ENCODE measurements at regions of chr3 and their contacts with region 1.

Region 1: DNA sequence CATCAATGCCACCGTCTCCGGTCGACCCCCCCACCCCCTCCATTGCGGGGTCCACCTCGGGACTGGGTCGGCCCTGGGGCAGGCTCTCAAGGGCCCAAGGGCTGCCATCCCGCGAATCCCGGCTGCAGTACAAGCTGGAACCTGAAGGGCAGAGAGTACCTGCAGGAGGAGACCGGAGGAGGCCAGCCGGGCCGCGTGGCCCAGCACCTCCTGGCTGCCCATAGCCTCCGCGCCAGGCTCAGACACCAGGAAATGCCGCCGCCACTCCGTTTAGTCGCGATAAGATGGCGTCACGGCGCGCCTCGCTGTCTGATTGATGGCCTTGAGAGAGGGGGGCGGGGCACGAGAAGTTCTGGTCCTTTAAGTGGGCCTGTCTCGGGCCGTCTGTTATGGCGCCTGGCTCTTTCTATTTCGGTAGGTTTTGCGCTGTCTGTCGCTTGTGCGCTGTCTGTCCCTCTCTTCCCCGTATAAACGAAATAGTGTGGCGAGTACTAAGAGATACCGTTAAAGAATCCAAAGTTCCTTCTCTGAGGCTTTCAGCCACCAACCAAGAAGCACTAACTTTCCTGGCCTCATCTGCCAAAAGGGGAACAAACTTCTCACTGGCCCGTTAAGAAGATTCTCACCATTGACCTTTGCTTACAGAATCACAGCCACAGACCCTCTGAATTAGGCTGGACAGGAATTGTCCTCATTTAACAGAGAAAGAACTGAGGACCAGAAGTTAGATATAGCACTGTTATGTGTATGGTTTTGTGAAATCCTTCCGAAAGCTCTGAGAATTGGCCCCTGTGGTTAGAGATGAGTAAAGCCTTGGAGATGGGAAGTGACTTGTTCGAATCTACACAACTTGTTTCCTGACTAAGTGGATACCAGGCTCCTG is at the start of gene RFT1:
- DNase-seq: peak; percentile 95 to 97 (median 96)
- H3K4me3 ChIP-seq: peak within 1 kb of the TSS; percentile 82 to 96 (median 95)
- H3K4me3 Mint-ChIP-seq: peak within 1 kb of the TSS; percentile 78 to 94
- H3K27ac ChIP-seq: peak within 1 kb of the TSS; percentile 95 to 100
- H3K27ac Mint-ChIP-seq: peak within 1 kb of the TSS; percentile 98 to 100 (median 99)
- H3K4me1 ChIP-seq: peaks cover 35 to 49% of the 10 kb centered on the region in 2 donors
- H3K4me1 Mint-ChIP-seq: peaks cover 38% of the 10 kb centered on the region
- H3K27me3 ChIP-seq: no peaks in the 10 kb centered on the region
- H3K27me3 Mint-ChIP-seq: peaks cover 0 to 2% (median 0%) of the 10 kb centered on the region in 3 donors
- CTCF ChIP-seq: no peak
- polyA plus RNA-seq, gene RFT1: 8.2 to 34.9 (median 25.6) TPM

Region 2: DNA sequence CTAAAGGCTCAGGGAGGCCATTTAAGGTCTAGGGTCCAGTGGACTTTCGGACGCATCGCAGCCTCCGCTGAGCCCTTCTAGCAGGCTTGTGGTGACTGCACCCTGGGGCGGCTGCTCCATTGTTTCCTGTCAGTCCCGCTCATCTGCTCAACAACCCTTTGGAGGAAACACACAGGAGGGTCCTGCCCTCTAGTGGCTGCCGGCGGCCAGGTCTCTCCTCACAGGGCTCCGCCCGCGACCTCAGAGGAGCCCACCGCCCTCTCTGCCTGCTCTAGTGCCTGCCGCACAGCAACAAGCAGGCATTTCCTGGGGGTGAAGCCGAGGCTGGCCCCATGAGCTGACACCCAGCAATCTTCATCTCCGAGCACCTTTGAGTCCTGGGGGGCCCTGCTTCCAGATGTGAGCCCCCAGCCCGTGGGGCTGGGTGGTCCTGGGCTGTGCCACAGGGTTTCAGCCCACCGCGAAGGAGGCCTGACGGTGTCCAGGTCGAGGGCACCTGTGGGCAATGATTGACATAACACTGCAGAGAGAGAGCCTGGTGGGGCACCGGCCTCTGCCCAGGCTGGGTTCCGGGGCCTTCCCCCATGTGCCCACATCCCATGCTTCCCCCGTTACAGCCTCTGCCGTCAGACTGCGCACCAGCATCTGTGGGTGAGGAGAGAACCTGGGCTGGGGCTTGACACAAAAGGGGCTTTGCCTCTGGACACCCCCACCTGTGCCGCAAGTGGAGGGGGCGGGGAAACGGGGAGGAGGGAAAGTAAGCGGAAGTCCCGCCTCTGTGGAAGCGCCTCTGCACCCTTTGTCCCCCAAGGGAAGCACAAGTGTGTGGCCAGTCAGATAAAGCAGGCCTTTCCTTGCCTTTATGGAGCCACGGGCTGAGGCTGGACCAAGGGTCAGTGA is 57.5 kb before region 1 on chr3:
- intact Hi-C with region 1: no loop called
- DNase-seq: peak; percentile 69 to 74 (median 73)
- H3K4me3 ChIP-seq: peak overlapping the region; percentile 64 to 99 (median 92)
- H3K4me3 Mint-ChIP-seq: peak overlapping the region; percentile 90 to 95
- H3K27ac ChIP-seq: peak overlapping the region; percentile 24 to 72
- H3K27ac Mint-ChIP-seq: peak overlapping the region; percentile 68 to 90 (median 79)
- H3K4me1 ChIP-seq: peaks cover 19 to 26% of the 10 kb centered on the region in 2 donors
- H3K4me1 Mint-ChIP-seq: peaks cover 23% of the 10 kb centered on the region
- H3K27me3 ChIP-seq: no peaks in the 10 kb centered on the region
- H3K27me3 Mint-ChIP-seq: peaks cover 3 to 6% (median 6%) of the 10 kb centered on the region in 3 donors
- CTCF ChIP-seq: peak; percentile 98

Region 3: GRCh38 chr3:53166781-53167291 is 36.4 kb after region 1 on chr3:
- intact Hi-C with region 1: loop called (anchors 5 kb)
- DNase-seq: peak; percentile 79 to 89 (median 89)
- H3K4me3 ChIP-seq: peak overlapping the region; percentile 8 to 93 (median 63)
- H3K4me3 Mint-ChIP-seq: peak overlapping the region; percentile 94 to 96
- H3K27ac ChIP-seq: peak overlapping the region; percentile 78 to 93
- H3K27ac Mint-ChIP-seq: peak overlapping the region; percentile 91 to 99 (median 96)
- H3K4me1 ChIP-seq: peaks cover 91 to 92% of the 10 kb centered on the region in 2 donors
- H3K4me1 Mint-ChIP-seq: peaks cover 94% of the 10 kb centered on the region
- H3K27me3 ChIP-seq: no peaks in the 10 kb centered on the region
- H3K27me3 Mint-ChIP-seq: peaks cover 0 to 3% (median 0%) of the 10 kb centered on the region in 3 donors
- CTCF ChIP-seq: no peak

Region 4: GRCh38 chr3:53180305-53181023 is 50.0 kb after region 1 on chr3:
- intact Hi-C with region 1: loop called in 1 of 2 experiments (anchors 5 kb)
- DNase-seq: peak; percentile 72 to 87 (median 75)
- H3K4me3 ChIP-seq: peak overlapping the region in 1 of 3 experiments; percentile 57
- H3K4me3 Mint-ChIP-seq: peak overlapping the region in 1 of 2 donors; percentile 65
- H3K27ac ChIP-seq: peak overlapping the region; percentile 54 to 65
- H3K27ac Mint-ChIP-seq: peak overlapping the region; percentile 70 to 89 (median 75)
- H3K4me1 ChIP-seq: peaks cover 52 to 59% of the 10 kb centered on the region in 2 donors
- H3K4me1 Mint-ChIP-seq: peaks cover 50% of the 10 kb centered on the region
- H3K27me3 ChIP-seq: no peaks in the 10 kb centered on the region
- H3K27me3 Mint-ChIP-seq: no peaks in the 10 kb centered on the region
- CTCF ChIP-seq: no peak

Region 5: DNA sequence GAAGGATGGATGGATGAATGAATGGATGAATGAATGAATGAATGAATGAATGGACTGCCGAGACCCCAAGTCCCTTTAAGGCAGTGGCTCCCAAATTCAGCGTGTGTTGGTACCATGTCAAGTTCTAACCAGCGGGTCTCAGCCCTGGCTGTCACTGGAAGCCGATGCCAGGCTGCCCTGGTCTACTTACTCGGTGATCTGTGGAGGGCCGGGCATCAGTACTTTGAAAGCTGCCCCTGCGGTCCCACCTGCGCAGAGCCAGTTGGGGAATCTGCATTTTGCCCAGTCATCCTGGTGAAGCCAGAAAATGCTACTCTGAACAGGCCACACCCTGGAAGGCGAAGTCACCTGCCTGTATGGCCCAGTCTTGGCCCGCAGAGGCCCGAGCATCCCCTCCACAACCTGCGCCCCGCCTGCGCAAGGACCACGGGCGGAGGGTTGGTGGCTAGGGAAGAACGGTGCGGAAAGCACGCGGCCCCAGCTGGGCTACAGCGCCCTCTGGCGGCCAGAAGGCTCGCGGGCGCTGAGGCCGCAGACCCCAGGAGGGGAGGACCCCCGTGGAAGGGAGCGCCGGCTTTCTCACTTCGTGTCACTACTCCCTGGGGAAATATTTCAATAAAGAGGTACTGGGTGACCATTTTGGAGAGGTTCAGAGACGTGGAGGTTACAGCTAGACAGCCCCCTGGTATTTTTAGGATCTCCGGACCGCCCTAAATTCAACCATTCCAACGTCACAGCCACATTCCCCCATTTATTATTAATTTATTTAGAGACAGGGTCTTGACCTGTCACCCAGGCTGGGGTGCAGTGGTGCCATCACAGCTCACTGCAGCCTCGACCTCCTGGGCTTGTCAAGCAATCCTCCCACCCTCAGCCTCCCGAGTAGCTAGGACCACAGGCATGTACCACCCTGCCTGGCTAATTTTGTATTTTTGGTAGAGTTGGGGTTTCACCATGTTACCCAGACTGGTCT is 65.5 kb after region 1 on chr3:
- intact Hi-C with region 1: loop called (anchors 5 kb)
- DNase-seq: peak; percentile 50 to 68 (median 54)
- H3K4me3 ChIP-seq: peak overlapping the region in 1 of 3 experiments; percentile 15
- H3K4me3 Mint-ChIP-seq: no peak overlapping the region
- H3K27ac ChIP-seq: peak overlapping the region; percentile 77 to 78
- H3K27ac Mint-ChIP-seq: peak overlapping the region; percentile 80 to 93 (median 90)
- H3K4me1 ChIP-seq: peaks cover 21 to 27% of the 10 kb centered on the region in 2 donors
- H3K4me1 Mint-ChIP-seq: peaks cover 33% of the 10 kb centered on the region
- H3K27me3 ChIP-seq: no peaks in the 10 kb centered on the region
- H3K27me3 Mint-ChIP-seq: peaks cover 0 to 3% (median 3%) of the 10 kb centered on the region in 3 donors
- CTCF ChIP-seq: peak; percentile 100